ENCODE measurements at regions of chr1 and their contacts with region 1.

Region 1: DNA sequence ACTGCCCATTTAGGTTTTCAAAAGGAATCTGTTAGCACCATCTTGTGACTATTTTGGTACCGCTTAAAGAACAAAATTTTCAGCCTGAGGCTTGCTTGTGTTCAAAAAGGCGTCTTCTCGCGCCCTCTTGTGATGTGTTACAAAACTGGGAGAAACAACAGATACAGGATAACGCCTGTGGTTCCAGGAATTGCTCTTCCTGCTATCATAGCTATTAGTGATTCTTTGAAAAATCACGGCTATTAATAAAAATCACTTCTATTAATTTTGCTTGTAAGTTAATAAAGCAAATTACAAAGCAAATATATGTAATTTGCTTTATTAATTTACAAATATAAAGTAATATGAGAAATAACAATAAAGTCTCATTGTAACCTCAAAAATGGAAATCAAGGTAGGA is 82.2 kb upstream of the ABCD3 start:
- DNase-seq: peak in 1 of 2 donors; percentile 77
- H3K4me3 ChIP-seq: no peak overlapping the region
- H3K27ac ChIP-seq: no peak overlapping the region
- H3K4me1 ChIP-seq: peaks cover 0 to 3% of the 10 kb centered on the region in 2 donors
- H3K27me3 ChIP-seq: no peaks in the 10 kb centered on the region
- CTCF ChIP-seq: peak; percentile 79 to 97 (median 96)
- POLR2A ChIP-seq: no peak

Region 2: GRCh38 chr1:94351485-94351884 is 15.5 kb after region 1 on chr1:
- intact Hi-C with region 1: no loop called
- DNase-seq: no peak
- H3K4me3 ChIP-seq: no peak overlapping the region
- H3K27ac ChIP-seq: no peak overlapping the region
- H3K4me1 ChIP-seq: no peaks in the 10 kb centered on the region
- H3K27me3 ChIP-seq: no peaks in the 10 kb centered on the region
- CTCF ChIP-seq: no peak
- POLR2A ChIP-seq: no peak

Region 3: DNA sequence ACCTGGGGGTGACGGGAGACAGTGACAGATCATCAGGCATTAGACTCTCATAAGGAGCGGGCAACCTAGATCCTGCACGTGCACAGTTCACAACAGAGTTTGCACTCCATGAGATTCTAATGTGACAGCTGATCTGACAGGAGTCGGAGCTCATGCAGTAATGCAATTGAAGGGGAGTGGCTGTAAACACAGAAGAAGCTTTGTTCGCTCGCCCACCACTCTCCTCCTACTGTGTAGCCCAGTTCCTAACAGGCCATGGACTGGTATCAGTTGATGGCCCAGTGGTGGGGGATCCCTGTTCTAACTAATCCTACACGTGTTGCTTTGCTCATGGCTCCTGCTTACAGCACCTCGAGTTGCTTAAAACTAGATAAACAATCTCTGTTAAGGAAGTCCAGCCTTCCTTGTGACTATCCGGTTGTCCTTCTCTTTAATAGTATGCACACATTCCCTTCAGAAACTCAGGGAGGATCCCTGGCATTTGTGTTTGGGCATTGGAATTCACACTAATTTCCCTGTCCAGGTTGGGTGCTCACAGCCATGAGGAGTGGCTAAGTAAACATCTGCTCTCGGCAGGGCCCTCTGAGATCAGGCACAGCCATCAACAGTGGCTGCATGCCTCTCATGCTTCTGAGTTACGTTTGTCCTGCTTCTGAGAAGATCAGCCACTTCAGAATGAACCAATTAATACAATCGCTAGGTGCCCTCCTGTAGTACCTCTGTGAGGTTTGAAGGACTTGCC is 226.7 kb after region 1 on chr1:
- intact Hi-C with region 1: loop called (anchors 5 kb)
- DNase-seq: no peak
- H3K4me3 ChIP-seq: no peak overlapping the region
- H3K27ac ChIP-seq: peak overlapping the region in 1 of 2 donors; percentile 7
- H3K4me1 ChIP-seq: no peaks in the 10 kb centered on the region
- H3K27me3 ChIP-seq: no peaks in the 10 kb centered on the region
- CTCF ChIP-seq: no peak
- POLR2A ChIP-seq: no peak

Region 4: DNA sequence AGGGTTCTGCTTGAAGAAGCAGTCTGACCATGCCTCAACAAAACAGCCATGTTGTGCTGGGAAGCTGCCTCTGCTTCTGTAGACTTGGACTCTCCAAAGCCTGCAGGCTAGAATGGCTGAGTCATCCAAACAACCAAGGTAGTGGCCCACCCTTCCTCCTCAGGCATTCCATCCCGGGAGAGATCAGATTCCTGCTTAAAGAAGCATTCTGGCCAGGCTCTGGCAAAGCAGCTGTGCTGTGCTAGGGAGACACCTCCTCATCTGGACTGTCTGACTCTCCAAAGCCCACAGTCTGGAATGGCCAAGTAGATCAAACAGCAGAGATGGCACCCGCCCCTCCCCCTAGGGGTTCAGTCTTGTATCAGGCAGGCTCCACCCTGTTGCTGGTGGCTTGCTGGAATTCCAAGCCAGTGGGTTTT is 243.9 kb after region 1 on chr1:
- intact Hi-C with region 1: no loop called
- DNase-seq: no peak
- H3K4me3 ChIP-seq: no peak overlapping the region
- H3K27ac ChIP-seq: peak overlapping the region; percentile 1 to 61
- H3K4me1 ChIP-seq: peaks cover 0 to 5% of the 10 kb centered on the region in 2 donors
- H3K27me3 ChIP-seq: no peaks in the 10 kb centered on the region
- CTCF ChIP-seq: no peak
- POLR2A ChIP-seq: no peak

Region 5: GRCh38 chr1:94757931-94758330 is 422.0 kb after region 1 on chr1:
- intact Hi-C with region 1: no loop called
- DNase-seq: peak in 1 of 2 donors; percentile 47
- H3K4me3 ChIP-seq: no peak overlapping the region
- H3K27ac ChIP-seq: peak overlapping the region; percentile 68 to 76
- H3K4me1 ChIP-seq: peaks cover 0 to 15% of the 10 kb centered on the region in 2 donors
- H3K27me3 ChIP-seq: no peaks in the 10 kb centered on the region
- CTCF ChIP-seq: no peak
- POLR2A ChIP-seq: no peak

Measured in breast epithelium (tissue), 4 donors.